ENCODE measurements at regions of chr17 and their contacts with region 1.

Region 1: DNA sequence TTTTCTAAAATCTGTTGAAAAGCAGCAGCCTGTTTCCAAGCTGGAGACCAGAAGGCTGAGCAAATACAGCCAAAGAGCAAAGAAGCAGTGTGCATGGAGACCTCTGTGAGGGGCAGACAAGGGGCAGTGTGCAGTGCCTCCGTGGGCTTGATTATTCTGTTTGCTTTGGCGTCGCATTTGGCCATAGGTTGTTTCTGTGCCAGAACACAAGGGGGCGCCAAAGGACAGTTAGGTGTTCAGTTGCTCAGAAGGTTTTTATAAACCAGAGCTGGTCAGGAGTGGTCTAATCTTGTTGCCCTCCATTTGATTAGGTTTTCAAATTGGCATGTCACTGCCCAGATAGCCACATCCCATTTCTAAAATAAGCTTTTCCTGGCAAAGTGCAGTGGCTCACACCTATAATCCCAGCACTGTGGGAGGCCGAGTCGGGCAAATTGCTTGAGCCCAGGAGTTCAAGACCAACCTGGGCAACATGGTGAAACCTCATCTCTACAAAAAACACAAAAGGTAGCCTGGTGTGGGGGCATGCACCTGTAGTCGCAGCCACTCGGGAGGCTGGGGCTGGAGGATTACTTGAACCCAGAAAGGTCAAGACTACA is 10.6 kb downstream of the MYH3 start:
- DNase-seq: peak; percentile 68 to 86
- ATAC-seq: peak; percentile 67 to 82 (median 72)
- H3K4me3 ChIP-seq: no peak overlapping the region
- H3K4me3 Mint-ChIP-seq: no peak overlapping the region
- H3K27ac ChIP-seq: no peak overlapping the region
- H3K27ac Mint-ChIP-seq: no peak overlapping the region
- H3K4me1 ChIP-seq: peaks cover 6% of the 10 kb centered on the region
- H3K4me1 Mint-ChIP-seq: peaks cover 11 to 23% of the 10 kb centered on the region in 2 donors
- H3K27me3 ChIP-seq: no peaks in the 10 kb centered on the region
- H3K27me3 Mint-ChIP-seq: no peaks in the 10 kb centered on the region
- CTCF ChIP-seq: peak; percentile 87

Region 2: GRCh38 chr17:10683853-10684252 is 37.4 kb after region 1 on chr17:
- intact Hi-C with region 1: loop called (anchors 5 kb)
- DNase-seq: peak in 1 of 2 donors; percentile 38
- ATAC-seq: no peak
- H3K4me3 ChIP-seq: no peak overlapping the region
- H3K4me3 Mint-ChIP-seq: no peak overlapping the region
- H3K27ac ChIP-seq: no peak overlapping the region
- H3K27ac Mint-ChIP-seq: no peak overlapping the region
- H3K4me1 ChIP-seq: no peaks in the 10 kb centered on the region
- H3K4me1 Mint-ChIP-seq: peaks cover 0 to 9% of the 10 kb centered on the region in 2 donors
- H3K27me3 ChIP-seq: no peaks in the 10 kb centered on the region
- H3K27me3 Mint-ChIP-seq: no peaks in the 10 kb centered on the region
- CTCF ChIP-seq: peak; percentile 61

Region 3: GRCh38 chr17:10844621-10845387 is 198.3 kb after region 1 on chr17:
- intact Hi-C with region 1: loop called (anchors 1 kb)
- DNase-seq: peak; percentile 49 to 82
- ATAC-seq: peak; percentile 88 to 99 (median 94)
- H3K4me3 ChIP-seq: peak overlapping the region; percentile 8
- H3K4me3 Mint-ChIP-seq: peak overlapping the region; percentile 21
- H3K27ac ChIP-seq: no peak overlapping the region
- H3K27ac Mint-ChIP-seq: peak overlapping the region in 1 of 2 donors; percentile 15
- H3K4me1 ChIP-seq: peaks cover 5% of the 10 kb centered on the region
- H3K4me1 Mint-ChIP-seq: peaks cover 8 to 12% of the 10 kb centered on the region in 2 donors
- H3K27me3 ChIP-seq: no peaks in the 10 kb centered on the region
- H3K27me3 Mint-ChIP-seq: peaks cover 8 to 14% of the 10 kb centered on the region in 2 donors
- CTCF ChIP-seq: peak; percentile 94

Measured in natural killer cell (primary cell).